ENCODE measurements at regions of chrX and their contacts with region 1.

Region 1: DNA sequence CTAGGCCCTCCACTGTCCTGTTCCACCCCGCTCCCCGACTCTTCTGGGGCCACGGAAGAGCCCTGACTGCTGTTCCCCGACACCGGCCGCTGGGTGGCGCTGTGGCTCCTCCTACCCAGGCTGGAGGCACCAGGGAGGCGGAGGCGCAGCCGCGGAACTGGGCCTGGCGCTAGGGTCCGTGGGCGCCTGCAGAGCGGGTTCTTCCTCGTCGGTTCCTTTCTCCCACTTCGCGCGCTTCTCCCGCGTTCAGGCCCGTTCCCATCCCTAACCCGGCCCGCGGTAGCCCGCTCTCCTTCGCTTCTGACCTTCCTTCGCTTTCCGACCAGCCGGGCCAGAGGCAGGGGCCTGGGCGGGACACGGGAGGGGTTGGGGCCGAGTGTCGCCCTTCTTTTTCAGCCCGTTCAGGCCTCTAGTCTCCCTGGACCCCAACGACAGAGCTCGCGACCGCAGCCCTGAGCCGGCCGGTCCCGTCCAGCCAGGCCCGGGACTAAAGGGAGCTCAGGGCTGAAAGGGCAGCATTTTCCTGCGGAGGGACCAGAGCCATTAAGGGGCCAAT is 34.3 kb downstream of the NALF2 start:
- DNase-seq: peak; percentile 77
- H3K4me3 ChIP-seq: peak overlapping the region in 3 of 4 donors; percentile 33 to 61 (median 40)
- H3K27ac ChIP-seq: no peak overlapping the region
- H3K4me1 ChIP-seq: no peaks in the 10 kb centered on the region
- H3K27me3 ChIP-seq: no peaks in the 10 kb centered on the region
- CTCF ChIP-seq: peak; percentile 65 to 73 (median 69)
- EP300 ChIP-seq: no peak
- POLR2A ChIP-seq: no peak

Region 2: GRCh38 chrX:69627744-69628143 is 89.3 kb after region 1 on chrX:
- in situ Hi-C with region 1: loop called in 1 of 4 experiments (anchors 10 kb)
- intact Hi-C with region 1: no loop called
- DNase-seq: no peak
- H3K4me3 ChIP-seq: no peak overlapping the region
- H3K27ac ChIP-seq: no peak overlapping the region
- H3K4me1 ChIP-seq: no peaks in the 10 kb centered on the region
- H3K27me3 ChIP-seq: no peaks in the 10 kb centered on the region
- CTCF ChIP-seq: no peak
- EP300 ChIP-seq: no peak
- POLR2A ChIP-seq: no peak

Region 3: DNA sequence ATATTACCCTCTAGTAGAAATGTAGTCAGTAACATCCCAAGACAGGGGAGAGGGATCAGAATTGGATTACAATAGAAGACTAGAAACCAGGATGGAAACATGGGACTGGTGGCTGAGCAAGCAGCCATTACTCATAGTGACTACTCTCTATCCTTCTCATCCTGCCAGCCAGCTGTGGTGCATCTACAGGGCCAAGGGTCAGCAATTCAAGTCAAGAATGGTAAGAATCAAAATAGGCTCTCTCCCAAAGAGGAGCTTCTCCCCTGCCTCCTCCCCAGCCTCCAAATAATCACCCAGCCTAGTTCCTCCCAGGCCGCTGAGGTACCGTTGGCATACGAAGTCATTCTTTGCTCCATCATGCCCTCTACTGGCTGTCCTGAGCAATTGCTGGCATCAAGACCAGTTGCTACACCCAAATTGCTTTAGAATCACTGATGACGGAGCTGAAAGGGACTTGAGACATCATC is 491.9 kb after region 1 on chrX:
- in situ Hi-C with region 1: loop called in 2 of 4 experiments (anchors 25 kb)
- intact Hi-C with region 1: no loop called
- DNase-seq: peak; percentile 13
- H3K4me3 ChIP-seq: no peak overlapping the region
- H3K27ac ChIP-seq: no peak overlapping the region
- H3K4me1 ChIP-seq: no peaks in the 10 kb centered on the region
- H3K27me3 ChIP-seq: no peaks in the 10 kb centered on the region
- CTCF ChIP-seq: peak; percentile 35 to 68 (median 59)
- EP300 ChIP-seq: no peak
- POLR2A ChIP-seq: no peak

Measured in transverse colon (tissue), 4 donors.